T-cell (primary cell): ENCODE measurements at regions of chr18 and their contacts with region 1.

Region 1: DNA sequence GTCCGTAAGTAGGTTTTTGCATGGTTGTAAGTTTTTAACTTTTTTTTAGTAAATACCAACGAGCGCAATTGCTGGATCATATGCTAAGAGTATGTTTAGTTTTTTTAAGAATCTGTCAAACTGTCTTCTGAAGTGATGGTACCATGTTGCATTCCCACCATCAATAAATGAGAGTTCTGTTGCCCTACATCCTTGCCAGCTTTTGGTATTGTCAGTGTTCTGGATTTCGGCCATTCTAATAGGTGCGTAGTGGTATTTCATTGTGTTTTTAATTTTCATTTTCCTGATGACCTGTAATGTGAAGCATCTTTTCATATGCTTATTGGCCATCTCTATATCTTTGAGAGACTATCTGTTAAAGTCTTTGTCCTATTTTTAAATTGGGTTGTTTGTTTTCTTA is 114.3 kb downstream of the LDLRAD4 start:
- DNase-seq: no peak
- ATAC-seq: no peak
- H3K4me3 ChIP-seq: no peak overlapping the region
- H3K4me3 Mint-ChIP-seq: no peak overlapping the region
- H3K27ac ChIP-seq: no peak overlapping the region
- H3K27ac Mint-ChIP-seq: no peak overlapping the region
- H3K4me1 ChIP-seq: no peaks in the 10 kb centered on the region
- H3K4me1 Mint-ChIP-seq: peaks cover 9 to 36% (median 20%) of the 10 kb centered on the region in 3 donors
- H3K27me3 ChIP-seq: no peaks in the 10 kb centered on the region
- H3K27me3 Mint-ChIP-seq: no peaks in the 10 kb centered on the region

Region 2: DNA sequence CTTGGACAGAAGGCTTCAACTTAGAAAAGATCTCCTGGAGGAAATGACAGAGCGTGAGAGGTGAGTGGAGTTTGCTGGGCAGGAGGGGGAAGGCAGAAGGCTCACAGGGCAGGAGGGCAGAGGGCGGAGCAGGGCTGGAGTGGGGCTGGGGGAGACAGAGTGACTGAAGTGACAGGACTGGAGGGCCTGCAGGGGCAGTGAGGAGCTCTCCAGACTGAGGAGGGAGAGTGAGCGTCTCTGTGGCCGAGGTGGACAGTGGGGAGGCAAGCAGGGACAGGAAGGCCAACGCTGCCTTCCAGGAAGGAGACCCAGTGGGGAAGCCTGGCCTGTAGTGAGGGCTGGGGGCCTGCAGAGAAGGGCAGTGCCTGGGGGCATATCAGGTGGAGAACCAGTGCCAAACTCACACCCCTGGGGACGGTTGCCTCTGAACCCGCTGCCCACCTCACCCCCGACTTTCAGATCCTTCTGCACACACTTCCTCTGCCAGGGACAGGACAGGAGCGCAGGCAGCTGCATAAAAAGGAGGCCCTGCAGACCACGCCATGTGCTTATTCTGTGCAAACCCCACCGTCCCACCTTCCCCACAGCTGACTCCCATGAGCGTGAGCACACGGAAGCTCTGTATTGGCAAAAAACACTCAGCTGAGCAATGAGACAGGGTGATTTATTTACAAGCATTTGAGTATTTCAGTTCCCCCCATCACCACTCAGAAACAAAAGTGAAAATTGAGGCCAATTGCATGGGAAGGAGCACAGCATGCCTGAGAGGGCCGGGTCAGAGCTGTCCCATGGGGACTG is 149.1 kb after region 1 on chr18:
- CTCF ChIA-PET with region 1: no interaction called
- POLR2A ChIA-PET with region 1: interaction called in 1 of 2 experiments, 10 read pairs
- DNase-seq: no peak
- ATAC-seq: no peak
- H3K4me3 ChIP-seq: no peak overlapping the region
- H3K4me3 Mint-ChIP-seq: peak overlapping the region in 1 of 3 donors; percentile 6
- H3K27ac ChIP-seq: no peak overlapping the region
- H3K27ac Mint-ChIP-seq: peak overlapping the region; percentile 83 to 88
- H3K4me1 ChIP-seq: peaks cover 0 to 18% of the 10 kb centered on the region in 2 experiments
- H3K4me1 Mint-ChIP-seq: peaks cover 40 to 52% (median 45%) of the 10 kb centered on the region in 3 donors
- H3K27me3 ChIP-seq: no peaks in the 10 kb centered on the region
- H3K27me3 Mint-ChIP-seq: no peaks in the 10 kb centered on the region